ENCODE measurements at regions of chr12 and their contacts with region 1.

Region 1: DNA sequence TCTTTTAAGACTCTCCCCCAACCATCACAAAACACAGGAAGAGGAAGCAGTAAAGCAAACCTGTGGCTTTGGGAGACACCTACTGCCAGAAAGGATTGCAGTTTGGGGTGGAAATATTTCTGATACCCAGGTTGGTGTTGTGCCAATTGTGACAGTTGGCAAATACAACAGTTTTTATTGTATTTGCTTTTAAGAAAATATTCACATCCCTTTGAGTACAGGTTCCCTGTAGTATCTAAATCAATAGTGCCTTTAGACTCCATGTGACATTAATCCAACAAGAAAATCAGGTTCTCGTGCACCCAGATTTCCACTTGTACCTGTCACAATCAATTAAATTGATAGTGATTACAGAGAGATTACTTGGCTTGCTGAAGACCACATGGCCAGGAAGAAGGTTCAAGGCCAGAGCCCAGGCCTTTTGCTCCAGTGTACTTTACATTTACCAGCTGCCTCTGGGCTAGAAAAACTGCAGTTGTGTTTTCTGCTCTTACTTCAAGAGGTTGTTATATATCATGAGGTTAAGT is 361.2 kb downstream of the ATP23 start:
- DNase-seq: peak; percentile 88
- ATAC-seq: peak; percentile 74
- H3K4me3 ChIP-seq: no peak overlapping the region
- H3K27ac ChIP-seq: peak overlapping the region; percentile 59
- H3K4me1 ChIP-seq: peaks cover 46% of the 10 kb centered on the region
- H3K27me3 ChIP-seq: no peaks in the 10 kb centered on the region
- CTCF ChIP-seq: peak; percentile 54

Region 2: GRCh38 chr12:57983146-57983857 is 319.2 kb before region 1 on chr12:
- CTCF ChIA-PET with region 1: interaction called, 5 read pairs
- POLR2A ChIA-PET with region 1: no interaction called
- intact Hi-C with region 1: loop called (anchors 1 kb)
- DNase-seq: peak; percentile 73
- ATAC-seq: no peak
- H3K4me3 ChIP-seq: no peak overlapping the region
- H3K27ac ChIP-seq: no peak overlapping the region
- H3K4me1 ChIP-seq: peaks cover 12% of the 10 kb centered on the region; the same call in 1 of the 2 replicates
- H3K27me3 ChIP-seq: no peaks in the 10 kb centered on the region
- CTCF ChIP-seq: peak; percentile 78

Region 3: DNA sequence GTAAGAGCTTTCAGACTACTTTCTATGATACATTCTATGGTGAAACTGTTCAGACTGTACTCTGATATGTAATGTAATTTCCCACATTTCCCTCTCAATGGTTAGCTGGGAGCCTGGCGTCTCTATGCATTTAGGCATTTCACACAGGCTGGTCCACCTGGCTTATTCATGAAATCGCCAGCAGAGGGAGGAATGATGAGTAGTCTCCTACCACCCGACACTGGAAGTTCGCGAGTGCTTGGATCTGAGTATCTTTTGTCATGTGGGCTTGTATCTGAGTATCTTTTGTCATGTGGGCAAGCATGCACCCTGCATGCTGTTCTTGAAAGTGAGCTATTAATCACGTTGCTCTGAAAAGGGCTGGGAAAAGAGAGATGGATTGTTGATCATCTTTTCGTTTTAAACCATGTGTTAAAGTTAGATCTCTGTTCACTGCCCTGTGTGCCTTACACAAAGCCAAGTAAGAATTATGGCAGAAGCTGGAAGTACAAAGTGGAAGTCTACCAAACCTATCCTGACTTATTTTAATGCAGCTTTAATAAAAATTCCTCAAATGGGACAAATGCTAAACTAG is 126.2 kb before region 1 on chr12:
- CTCF ChIA-PET with region 1: no interaction called
- POLR2A ChIA-PET with region 1: no interaction called
- intact Hi-C with region 1: loop called (anchors 1 kb)
- DNase-seq: peak; percentile 85
- ATAC-seq: peak; percentile 96
- H3K4me3 ChIP-seq: no peak overlapping the region
- H3K27ac ChIP-seq: no peak overlapping the region
- H3K4me1 ChIP-seq: no peaks in the 10 kb centered on the region
- H3K27me3 ChIP-seq: no peaks in the 10 kb centered on the region
- CTCF ChIP-seq: peak; percentile 82